BJ (cell line): ENCODE measurements at regions of chr6 and their contacts with region 1.

Region 1: DNA sequence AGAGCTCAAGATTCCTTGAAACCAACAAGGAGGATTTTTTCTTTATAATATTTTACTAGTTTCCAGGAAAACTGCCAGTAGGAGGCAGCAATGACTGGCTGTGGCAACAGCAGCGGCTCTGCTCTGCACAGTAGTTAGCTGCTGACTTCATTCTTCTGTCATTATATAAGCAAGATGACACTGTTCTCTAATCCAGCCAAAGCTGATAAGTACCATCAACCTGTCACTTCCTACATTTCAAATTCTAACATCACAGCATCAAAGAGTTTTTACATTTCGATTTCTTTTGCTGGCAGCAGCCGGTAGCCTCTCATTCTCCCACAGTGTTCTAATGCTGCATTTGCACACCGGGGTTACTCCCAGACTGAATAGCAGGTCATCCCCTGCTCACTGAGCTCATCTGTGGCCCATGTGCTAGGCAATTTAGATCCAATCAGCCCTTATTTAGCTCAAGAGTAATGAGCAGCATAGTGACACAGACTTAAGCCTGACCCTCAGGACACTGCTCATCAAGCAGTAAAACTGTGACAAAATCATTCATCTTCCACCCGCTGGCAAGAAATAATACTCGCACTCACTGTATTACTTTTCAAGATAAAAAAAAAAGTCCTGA is 67.8 kb downstream of the MMS22L start:
- DNase-seq: peak; percentile 22
- H3K4me3 ChIP-seq: no peak overlapping the region
- H3K27me3 ChIP-seq: no peaks in the 10 kb centered on the region
- CTCF ChIP-seq: peak; percentile 69

Region 2: DNA sequence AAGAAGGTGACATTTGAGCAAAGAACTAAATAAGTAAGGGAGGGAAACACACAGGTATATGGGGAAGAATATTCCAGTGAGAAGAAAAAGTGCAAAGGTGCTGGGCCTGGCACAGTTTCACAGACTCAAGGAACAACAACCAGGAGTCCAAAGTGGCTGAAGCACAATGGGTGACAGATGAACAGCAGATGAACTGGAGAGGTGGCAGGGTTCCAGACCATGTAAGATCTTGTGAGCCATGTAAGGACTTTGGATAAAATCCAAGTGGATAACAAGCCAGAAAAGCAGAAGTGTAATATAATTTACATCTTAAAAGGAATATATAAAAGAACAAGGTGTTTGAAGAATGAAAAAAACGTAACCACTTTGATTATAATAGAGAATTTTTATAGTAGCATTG is 20.1 kb before region 1 on chr6:
- CTCF ChIA-PET with region 1: interaction called, 14 read pairs
- POLR2A ChIA-PET with region 1: no interaction called
- DNase-seq: no peak
- H3K4me3 ChIP-seq: no peak overlapping the region
- H3K27me3 ChIP-seq: no peaks in the 10 kb centered on the region
- CTCF ChIP-seq: no peak

Region 3: DNA sequence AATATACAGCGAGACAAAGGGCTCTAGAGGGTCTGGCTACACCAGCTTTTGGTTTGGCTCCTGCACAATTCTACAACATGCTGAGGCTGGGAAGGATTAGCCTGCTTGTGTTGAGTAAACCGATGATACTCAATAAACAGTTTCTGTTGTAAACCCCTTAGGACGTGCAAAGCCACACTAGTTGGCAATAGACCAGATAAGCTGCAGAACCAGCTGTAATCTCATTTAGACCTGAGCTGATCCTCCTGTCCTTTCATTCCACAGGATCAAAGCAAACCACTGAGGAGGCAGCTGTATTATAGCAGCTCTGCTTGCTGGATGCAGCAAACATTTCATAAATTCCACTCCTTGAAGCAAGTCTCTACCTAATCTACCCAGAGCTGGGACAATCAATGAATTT is 11.9 kb before region 1 on chr6:
- CTCF ChIA-PET with region 1: interaction called, 20 read pairs
- POLR2A ChIA-PET with region 1: interaction called, 15 read pairs
- DNase-seq: no peak
- H3K4me3 ChIP-seq: no peak overlapping the region
- H3K27me3 ChIP-seq: no peaks in the 10 kb centered on the region
- CTCF ChIP-seq: no peak

Region 4: GRCh38 chr6:97394160-97394748 is 179.0 kb after region 1 on chr6:
- CTCF ChIA-PET with region 1: interaction called, 26 read pairs
- POLR2A ChIA-PET with region 1: no interaction called
- DNase-seq: no peak
- H3K4me3 ChIP-seq: no peak overlapping the region
- H3K27me3 ChIP-seq: peaks cover 2% of the 10 kb centered on the region; the same call in 1 of the 2 replicates
- CTCF ChIP-seq: peak; percentile 85

Region 5: GRCh38 chr6:97437087-97437486 is 221.8 kb after region 1 on chr6:
- CTCF ChIA-PET with region 1: interaction called, 11 read pairs
- POLR2A ChIA-PET with region 1: no interaction called
- DNase-seq: no peak
- H3K4me3 ChIP-seq: no peak overlapping the region
- H3K27me3 ChIP-seq: no peaks in the 10 kb centered on the region; the same call in 1 of the 2 replicates
- CTCF ChIP-seq: peak; percentile 90